ENCODE measurements at regions of chr14 and their contacts with region 1.

Region 1: GRCh38 chr14:60734465-60735242 is at the start of gene MNAT1:
- DNase-seq: peak in 1 of 2 donors; percentile 84
- H3K4me3 ChIP-seq: peak within 1 kb of the TSS; percentile 67 to 98
- H3K27ac ChIP-seq: peak within 1 kb of the TSS; percentile 68 to 88
- H3K4me1 ChIP-seq: peaks cover 0 to 12% of the 10 kb centered on the region in 2 donors
- H3K27me3 ChIP-seq: no peaks in the 10 kb centered on the region
- CTCF ChIP-seq: no peak
- total RNA-seq, gene MNAT1: 37.5 TPM

Region 2: GRCh38 chr14:60859525-60859924 is 124.9 kb after region 1 on chr14:
- intact Hi-C with region 1: no loop called
- DNase-seq: no peak
- H3K4me3 ChIP-seq: no peak overlapping the region
- H3K27ac ChIP-seq: no peak overlapping the region
- H3K4me1 ChIP-seq: peaks cover 0 to 8% of the 10 kb centered on the region in 2 donors
- H3K27me3 ChIP-seq: no peaks in the 10 kb centered on the region
- CTCF ChIP-seq: no peak

Region 3: DNA sequence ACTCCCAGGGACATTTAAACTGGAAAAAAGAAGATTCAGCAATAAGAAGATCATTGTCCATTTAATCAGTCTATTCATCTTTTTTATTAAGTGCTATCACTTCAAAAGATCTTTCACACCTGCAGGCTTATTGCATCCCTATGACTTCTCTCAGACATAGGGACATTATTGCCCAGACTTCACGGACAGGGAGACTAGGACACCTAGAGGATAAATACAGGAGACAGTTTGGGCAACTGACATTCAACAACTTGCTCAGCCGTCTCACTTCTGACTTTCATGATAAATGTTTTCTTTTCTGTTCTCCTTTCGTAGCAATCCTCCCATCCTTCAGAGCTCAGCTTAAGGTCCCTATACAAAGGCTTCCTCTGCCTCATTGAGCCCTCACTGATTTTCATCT is 462.1 kb after region 1 on chr14:
- intact Hi-C with region 1: loop called (anchors 10 kb)
- DNase-seq: no peak
- H3K4me3 ChIP-seq: no peak overlapping the region
- H3K27ac ChIP-seq: no peak overlapping the region
- H3K4me1 ChIP-seq: no peaks in the 10 kb centered on the region
- H3K27me3 ChIP-seq: no peaks in the 10 kb centered on the region
- CTCF ChIP-seq: peak in 1 of 3 experiments; percentile 21

Measured in ascending aorta (tissue), 2 donors.